Left cardiac atrium (tissue), 4 donors: ENCODE measurements at regions of chr22 and their contacts with region 1.

Region 1: GRCh38 chr22:36552289-36552688 is 23.3 kb upstream of the EIF3D start:
- DNase-seq: no peak
- ATAC-seq: no peak

Region 2: GRCh38 chr22:36344106-36344827 is 208.0 kb before region 1 on chr22:
- intact Hi-C with region 1: no loop called
- DNase-seq: no peak
- ATAC-seq: no peak

Region 3: DNA sequence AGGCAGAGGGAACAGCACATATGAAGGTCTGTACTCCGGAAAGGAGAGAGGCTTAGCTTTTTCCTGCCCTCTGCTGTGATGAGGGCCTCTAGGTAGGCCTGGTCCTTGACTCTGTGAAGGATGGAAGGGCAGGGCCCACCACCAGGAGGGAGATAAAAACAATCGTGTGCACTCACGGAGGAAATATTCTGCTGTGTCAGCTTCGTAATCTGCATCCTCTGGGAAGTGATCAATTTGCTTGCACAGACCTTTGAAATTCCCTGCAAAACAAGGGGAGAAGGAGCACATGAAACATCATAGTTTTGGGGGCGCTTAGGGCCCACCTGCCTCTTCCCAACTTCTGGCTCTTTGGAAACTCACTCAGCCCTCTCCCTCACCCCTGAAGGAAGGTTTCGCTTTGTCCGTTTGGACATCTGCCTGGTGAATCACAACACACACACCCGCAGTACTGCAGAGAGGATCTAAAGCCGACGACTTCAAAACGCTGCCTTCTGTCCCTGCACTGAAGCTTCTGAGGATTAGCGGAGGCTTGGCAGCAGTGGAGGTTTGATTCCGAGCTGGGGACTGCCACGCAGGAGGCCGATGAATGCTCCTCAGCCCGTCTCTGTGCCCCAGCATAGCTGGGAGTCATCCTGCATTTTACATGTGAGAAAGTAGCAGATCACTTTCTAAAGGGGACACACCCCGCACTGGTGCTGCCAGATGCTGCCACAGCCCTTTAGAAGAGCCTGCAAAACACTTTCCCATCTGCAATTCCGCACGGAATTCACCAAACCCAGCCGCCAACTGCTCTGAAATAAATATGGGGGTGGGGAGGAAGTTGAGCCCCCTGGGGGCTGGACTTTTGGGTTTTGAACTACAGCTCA is 35.2 kb after region 1 on chr22:
- intact Hi-C with region 1: no loop called
- DNase-seq: no peak
- ATAC-seq: peak in 1 of 2 donors; percentile 47

Region 4: DNA sequence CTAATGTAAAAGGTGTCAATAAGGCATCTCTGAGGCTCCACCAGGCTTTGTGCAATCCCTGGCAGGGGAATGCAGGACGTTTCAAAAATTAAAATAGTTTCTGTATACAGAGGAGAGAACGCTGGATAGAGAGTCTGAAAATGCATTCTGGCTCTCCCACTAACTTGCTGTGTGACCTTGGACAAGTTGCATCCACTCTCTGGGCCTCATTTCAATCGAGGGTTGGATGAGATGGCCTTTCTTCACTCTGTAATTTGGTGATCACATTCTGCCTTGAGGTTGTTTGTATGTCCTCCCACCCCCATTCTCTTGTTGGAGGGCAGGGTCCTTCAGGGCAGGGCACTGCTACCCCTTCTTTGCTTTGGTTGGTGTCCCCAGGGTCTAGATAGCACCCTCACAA is 72.8 kb after region 1 on chr22:
- intact Hi-C with region 1: loop called in 1 of 2 experiments (anchors 2 kb)
- DNase-seq: no peak
- ATAC-seq: no peak